ENCODE measurements at regions of chr14 and their contacts with region 1.

Region 1: GRCh38 chr14:105203057-105203531 is 22.0 kb upstream of the NUDT14 start:
- DNase-seq: peak; percentile 81
- ATAC-seq: peak; percentile 60
- H3K4me3 ChIP-seq: no peak overlapping the region
- H3K27ac ChIP-seq: no peak overlapping the region
- H3K4me1 ChIP-seq: peaks cover 24% of the 10 kb centered on the region
- H3K27me3 ChIP-seq: no peaks in the 10 kb centered on the region
- CTCF ChIP-seq: peak; percentile 92

Region 2: GRCh38 chr14:105281371-105282097 is 78.4 kb after region 1 on chr14:
- CTCF ChIA-PET with region 1: no interaction called
- POLR2A ChIA-PET with region 1: no interaction called
- intact Hi-C with region 1: loop called (anchors 2 kb)
- DNase-seq: peak; percentile 54
- ATAC-seq: no peak; the same call in none of the 2 replicates
- H3K4me3 ChIP-seq: no peak overlapping the region
- H3K27ac ChIP-seq: no peak overlapping the region
- H3K4me1 ChIP-seq: no peaks in the 10 kb centered on the region
- H3K27me3 ChIP-seq: no peaks in the 10 kb centered on the region
- CTCF ChIP-seq: peak; percentile 71

Region 3: GRCh38 chr14:105351920-105352851 is 149.1 kb after region 1 on chr14:
- CTCF ChIA-PET with region 1: interaction called, 14 read pairs
- POLR2A ChIA-PET with region 1: no interaction called
- intact Hi-C with region 1: loop called (anchors 1 kb)
- DNase-seq: peak; percentile 92
- ATAC-seq: peak; percentile 98
- H3K4me3 ChIP-seq: no peak overlapping the region
- H3K27ac ChIP-seq: no peak overlapping the region
- H3K4me1 ChIP-seq: no peaks in the 10 kb centered on the region
- H3K27me3 ChIP-seq: no peaks in the 10 kb centered on the region
- CTCF ChIP-seq: peak; percentile 81